ENCODE measurements at regions of chr6 and their contacts with region 1.

Region 1: DNA sequence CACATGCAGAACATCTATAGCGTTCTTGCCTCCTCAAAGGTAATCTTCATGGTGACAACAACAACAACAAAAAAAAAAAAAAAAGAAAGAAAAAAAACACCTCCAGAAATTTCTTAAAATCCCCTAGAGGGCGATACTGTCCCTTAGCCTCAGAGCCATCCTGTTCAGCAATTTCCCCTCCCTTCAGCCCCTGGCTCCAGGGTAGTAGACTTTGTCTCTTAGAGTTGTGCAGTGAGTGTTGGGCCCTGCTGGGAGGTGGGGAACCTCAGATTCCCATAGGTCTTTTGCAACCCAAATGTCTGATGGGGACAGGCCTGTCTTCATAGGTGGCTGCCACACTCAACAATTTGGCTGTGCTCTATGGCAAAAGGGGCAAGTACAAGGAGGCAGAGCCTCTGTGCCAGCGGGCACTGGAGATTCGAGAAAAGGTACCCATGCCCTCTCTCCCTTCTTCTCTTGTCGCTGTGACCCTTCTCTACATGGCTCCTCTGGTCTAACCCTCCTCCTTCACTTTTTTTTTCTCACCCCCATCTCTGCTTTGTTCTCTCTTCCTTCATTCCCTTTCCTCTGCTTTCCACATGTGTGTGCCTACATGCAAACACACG is 6.0 kb upstream of the PTK7 start:
- DNase-seq: no peak
- H3K4me3 ChIP-seq: no peak overlapping the region
- H3K27ac ChIP-seq: no peak overlapping the region
- H3K4me1 ChIP-seq: no peaks in the 10 kb centered on the region
- H3K27me3 ChIP-seq: no peaks in the 10 kb centered on the region
- CTCF ChIP-seq: peak; percentile 34 to 46 (median 37)
- EP300 ChIP-seq: no peak
- POLR2A ChIP-seq: no peak

Region 2: DNA sequence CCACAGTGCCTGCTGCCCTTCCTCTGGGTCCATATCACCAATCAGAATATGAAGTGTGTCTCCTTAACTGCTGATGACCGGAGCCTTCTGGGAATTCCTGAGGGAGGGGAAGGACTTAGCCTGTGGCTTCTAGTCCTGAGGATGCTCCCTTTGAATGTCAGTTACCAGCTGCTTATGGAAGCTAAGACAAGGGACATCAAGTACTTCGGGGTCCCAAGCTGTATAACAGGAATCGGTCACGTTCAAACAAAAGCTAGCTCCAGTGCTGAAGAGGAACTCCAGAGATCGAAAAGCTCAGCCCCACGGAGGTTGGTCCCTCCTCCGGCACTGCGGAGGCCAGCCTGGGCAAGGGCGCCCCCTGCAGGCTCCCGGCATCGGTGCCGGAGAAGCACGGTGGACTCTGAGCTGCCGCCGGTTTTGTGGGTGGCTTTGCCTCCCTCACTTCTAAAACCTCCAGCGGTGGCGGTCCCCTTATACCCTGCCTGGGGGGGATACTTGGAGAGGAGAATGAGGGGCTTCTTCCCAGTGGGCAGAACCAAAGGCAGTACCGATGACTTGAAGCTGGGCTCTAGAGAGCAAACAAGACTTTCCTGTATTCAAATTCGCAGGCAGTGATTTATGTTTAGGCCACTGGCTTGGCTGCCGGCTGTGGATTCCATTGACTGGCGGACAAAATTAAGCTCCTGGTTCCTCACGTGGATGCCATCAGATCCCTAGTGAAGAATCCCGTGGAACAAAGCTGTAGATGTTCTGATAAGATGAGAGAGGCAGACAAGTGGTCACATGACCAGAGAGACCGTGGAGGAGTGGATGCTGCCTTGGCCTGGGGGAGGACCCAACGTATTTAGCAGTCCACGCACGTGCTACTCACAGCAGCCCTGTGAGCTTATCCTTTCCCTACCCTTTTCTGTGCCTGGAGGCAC is 522.5 kb before region 1 on chr6:
- in situ Hi-C with region 1: no loop called
- intact Hi-C with region 1: no loop called
- DNase-seq: peak; percentile 89
- H3K4me3 ChIP-seq: peak overlapping the region in 3 of 4 donors; percentile 21 to 55 (median 38)
- H3K27ac ChIP-seq: peak overlapping the region; percentile 60 to 75 (median 72)
- H3K4me1 ChIP-seq: peaks cover 0 to 12% (median 4%) of the 10 kb centered on the region in 4 donors
- H3K27me3 ChIP-seq: no peaks in the 10 kb centered on the region
- CTCF ChIP-seq: peak; percentile 95 to 99 (median 99)
- EP300 ChIP-seq: no peak
- POLR2A ChIP-seq: no peak

Region 3: DNA sequence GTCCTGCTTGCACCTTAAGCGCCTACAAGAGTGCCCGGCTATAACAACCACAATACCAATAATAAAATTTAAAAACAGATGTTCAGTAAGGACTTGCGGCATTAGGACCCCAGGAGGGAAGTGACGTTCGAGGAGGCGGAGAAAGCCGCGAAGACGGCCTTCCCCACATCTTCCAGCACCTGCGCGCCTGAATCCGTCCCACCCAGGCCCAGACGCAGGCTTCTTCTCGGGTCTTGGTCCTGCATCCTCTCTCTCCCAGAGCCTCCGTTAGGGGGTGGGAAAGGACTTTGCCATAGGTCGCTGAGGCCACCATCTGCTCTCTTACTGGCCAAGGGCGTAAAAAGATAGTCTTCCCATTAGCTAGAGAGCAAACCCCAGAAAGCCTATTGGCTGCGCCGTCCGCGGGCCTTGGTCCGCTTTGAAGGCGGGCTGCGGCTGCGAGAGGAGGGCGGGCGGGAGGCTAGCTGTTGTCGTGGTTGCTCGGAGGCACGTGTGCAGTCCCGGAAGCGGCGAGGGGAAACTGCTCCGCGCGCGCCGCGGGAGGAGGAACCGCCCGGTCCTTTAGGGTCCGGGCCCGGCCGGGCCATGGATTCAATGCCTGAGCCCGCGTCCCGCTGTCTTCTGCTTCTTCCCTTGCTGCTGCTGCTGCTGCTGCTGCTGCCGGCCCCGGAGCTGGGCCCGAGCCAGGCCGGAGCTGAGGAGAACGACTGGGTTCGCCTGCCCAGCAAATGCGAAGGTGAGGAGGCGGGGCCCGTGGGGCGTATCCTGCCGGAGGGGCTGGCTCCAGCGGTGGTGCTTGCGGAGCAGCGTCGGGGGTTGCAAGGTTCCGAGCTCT is 140.9 kb before region 1 on chr6 and contains the start of gene CNPY3:
- in situ Hi-C with region 1: no loop called
- intact Hi-C with region 1: no loop called
- DNase-seq: peak; percentile 96
- H3K4me3 ChIP-seq: peak within 1 kb of the TSS; percentile 53 to 69 (median 63)
- H3K27ac ChIP-seq: peak within 1 kb of the TSS; percentile 90 to 94 (median 90)
- H3K4me1 ChIP-seq: peaks cover 16 to 45% (median 22%) of the 10 kb centered on the region in 4 donors
- H3K27me3 ChIP-seq: peaks cover 3% of the 10 kb centered on the region
- CTCF ChIP-seq: peak in 1 of 5 experiments; percentile 17
- EP300 ChIP-seq: no peak
- POLR2A ChIP-seq: peak; percentile 86
- total RNA-seq, gene CNPY3: 10.3 to 24.4 (median 21.0) TPM

Region 4: GRCh38 chr6:44289726-44290260 is 1219.7 kb after region 1 on chr6:
- in situ Hi-C with region 1: no loop called
- intact Hi-C with region 1: loop called (anchors 5 kb)
- DNase-seq: no peak
- H3K4me3 ChIP-seq: no peak overlapping the region
- H3K27ac ChIP-seq: no peak overlapping the region
- H3K4me1 ChIP-seq: no peaks in the 10 kb centered on the region
- H3K27me3 ChIP-seq: peaks cover 84% of the 10 kb centered on the region
- CTCF ChIP-seq: no peak
- EP300 ChIP-seq: no peak
- POLR2A ChIP-seq: no peak